H1 (cell line): ENCODE measurements at regions of chr10 and their contacts with region 1.

Region 1: GRCh38 chr10:95246579-95247051 is 44.2 kb downstream of the PDLIM1 start:
- DNase-seq: peak in 1 of 2 experiments; percentile 90
- H3K4me3 ChIP-seq: no peak overlapping the region
- H3K27ac ChIP-seq: no peak overlapping the region
- H3K4me1 ChIP-seq: peaks cover 0 to 11% (median 2%) of the 10 kb centered on the region in 4 experiments; a peak in 4 of 7 replicates
- H3K27me3 ChIP-seq: no peaks in the 10 kb centered on the region
- CTCF ChIP-seq: peak; percentile 61 to 89 (median 82)
- EP300 ChIP-seq: no peak
- POLR2A ChIP-seq: no peak
- RAD21 ChIP-seq: peak; percentile 85 to 89

Region 2: GRCh38 chr10:95183271-95184230 is 63.1 kb before region 1 on chr10:
- CTCF ChIA-PET with region 1: interaction called, 90 read pairs
- POLR2A ChIA-PET with region 1: interaction called, 4 read pairs
- DNase-seq: peak; percentile 51 to 96
- H3K4me3 ChIP-seq: peak overlapping the region; percentile 45 to 67 (median 62)
- H3K27ac ChIP-seq: peak overlapping the region; percentile 71
- H3K4me1 ChIP-seq: peaks cover 0 to 4% (median 0%) of the 10 kb centered on the region in 4 experiments; a peak in 2 of 7 replicates
- H3K27me3 ChIP-seq: no peaks in the 10 kb centered on the region
- CTCF ChIP-seq: peak; percentile 84 to 98 (median 86)
- EP300 ChIP-seq: peak in 1 of 2 experiments; percentile 69; a peak in 1 of 3 replicates
- POLR2A ChIP-seq: peak in 1 of 2 experiments; percentile 67; a peak in 1 of 3 replicates
- RAD21 ChIP-seq: peak; percentile 76 to 83

Region 3: GRCh38 chr10:95208702-95209391 is 37.8 kb before region 1 on chr10:
- CTCF ChIA-PET with region 1: interaction called, 18 read pairs
- POLR2A ChIA-PET with region 1: interaction called, 3 read pairs
- DNase-seq: no peak
- H3K4me3 ChIP-seq: no peak overlapping the region
- H3K27ac ChIP-seq: peak overlapping the region; percentile 62; the same call in 1 of the 2 replicates
- H3K4me1 ChIP-seq: peaks cover 0 to 5% (median 3%) of the 10 kb centered on the region in 4 experiments; a peak in 5 of 7 replicates
- H3K27me3 ChIP-seq: no peaks in the 10 kb centered on the region
- CTCF ChIP-seq: no peak
- EP300 ChIP-seq: no peak
- POLR2A ChIP-seq: no peak
- RAD21 ChIP-seq: peak in 1 of 2 experiments; percentile 7; a peak in 1 of 4 replicates

Region 4: GRCh38 chr10:95260397-95260881 is 13.8 kb after region 1 on chr10:
- CTCF ChIA-PET with region 1: interaction called, 52 read pairs
- POLR2A ChIA-PET with region 1: no interaction called
- DNase-seq: peak in 1 of 2 experiments; percentile 28
- H3K4me3 ChIP-seq: no peak overlapping the region
- H3K27ac ChIP-seq: no peak overlapping the region
- H3K4me1 ChIP-seq: peaks cover 5 to 21% (median 12%) of the 10 kb centered on the region in 4 experiments
- H3K27me3 ChIP-seq: no peaks in the 10 kb centered on the region
- CTCF ChIP-seq: no peak
- EP300 ChIP-seq: no peak
- POLR2A ChIP-seq: no peak
- RAD21 ChIP-seq: no peak

Region 5: GRCh38 chr10:95289003-95289920 is 42.6 kb after region 1 on chr10:
- CTCF ChIA-PET with region 1: interaction called, 19 read pairs
- POLR2A ChIA-PET with region 1: interaction called, 3 read pairs
- DNase-seq: no peak
- H3K4me3 ChIP-seq: peak overlapping the region; percentile 75 to 93 (median 86)
- H3K27ac ChIP-seq: no peak overlapping the region
- H3K4me1 ChIP-seq: peaks cover 5 to 15% (median 9%) of the 10 kb centered on the region in 4 experiments; a peak in 6 of 7 replicates
- H3K27me3 ChIP-seq: peaks cover 0 to 6% (median 4%) of the 10 kb centered on the region in 4 experiments; a peak in 5 of 7 replicates
- CTCF ChIP-seq: peak; percentile 25 to 59 (median 49); a peak in 3 of 4 replicates
- EP300 ChIP-seq: no peak
- POLR2A ChIP-seq: peak in 1 of 2 experiments; percentile 40; a peak in 2 of 3 replicates
- RAD21 ChIP-seq: peak; percentile 39 to 41; a peak in 2 of 4 replicates

Region 6: GRCh38 chr10:95350219-95350829 is 103.7 kb after region 1 on chr10:
- CTCF ChIA-PET with region 1: interaction called, 18 read pairs
- POLR2A ChIA-PET with region 1: no interaction called
- DNase-seq: no peak
- H3K4me3 ChIP-seq: no peak overlapping the region
- H3K27ac ChIP-seq: no peak overlapping the region
- H3K4me1 ChIP-seq: peaks cover 0 to 2% (median 0%) of the 10 kb centered on the region in 4 experiments; a peak in 1 of 7 replicates
- H3K27me3 ChIP-seq: no peaks in the 10 kb centered on the region
- CTCF ChIP-seq: no peak
- EP300 ChIP-seq: no peak
- POLR2A ChIP-seq: no peak
- RAD21 ChIP-seq: no peak

Region 7: GRCh38 chr10:95400787-95401186 is 154.2 kb after region 1 on chr10:
- CTCF ChIA-PET with region 1: interaction called, 11 read pairs
- POLR2A ChIA-PET with region 1: no interaction called
- DNase-seq: no peak
- H3K4me3 ChIP-seq: no peak overlapping the region
- H3K27ac ChIP-seq: no peak overlapping the region
- H3K4me1 ChIP-seq: no peaks in the 10 kb centered on the region
- H3K27me3 ChIP-seq: no peaks in the 10 kb centered on the region
- CTCF ChIP-seq: no peak
- EP300 ChIP-seq: no peak
- POLR2A ChIP-seq: no peak
- RAD21 ChIP-seq: no peak